Activated T-helper 2 cell treated with anti-CD3 and anti-CD28 coated beads, Interferon-gamma antibody, Interleukin-2, Interleukin-4, amounts not matched to agents 10 μg/mL and 5 μg/mL and 100 μg/mL, durations not matched to agents 14 hours and 24 hours and 36 hours (primary cell): ENCODE measurements at regions of chr9 and their contacts with region 1.

Region 1: GRCh38 chr9:72592502-72593403 is 71.3 kb downstream of the TMC1 start:
- DNase-seq: no peak
- H3K4me3 Mint-ChIP-seq: no peak overlapping the region
- H3K27ac Mint-ChIP-seq: no peak overlapping the region
- H3K4me1 Mint-ChIP-seq: peaks cover 50% of the 10 kb centered on the region
- H3K27me3 Mint-ChIP-seq: peaks cover 8% of the 10 kb centered on the region

Region 2: DNA sequence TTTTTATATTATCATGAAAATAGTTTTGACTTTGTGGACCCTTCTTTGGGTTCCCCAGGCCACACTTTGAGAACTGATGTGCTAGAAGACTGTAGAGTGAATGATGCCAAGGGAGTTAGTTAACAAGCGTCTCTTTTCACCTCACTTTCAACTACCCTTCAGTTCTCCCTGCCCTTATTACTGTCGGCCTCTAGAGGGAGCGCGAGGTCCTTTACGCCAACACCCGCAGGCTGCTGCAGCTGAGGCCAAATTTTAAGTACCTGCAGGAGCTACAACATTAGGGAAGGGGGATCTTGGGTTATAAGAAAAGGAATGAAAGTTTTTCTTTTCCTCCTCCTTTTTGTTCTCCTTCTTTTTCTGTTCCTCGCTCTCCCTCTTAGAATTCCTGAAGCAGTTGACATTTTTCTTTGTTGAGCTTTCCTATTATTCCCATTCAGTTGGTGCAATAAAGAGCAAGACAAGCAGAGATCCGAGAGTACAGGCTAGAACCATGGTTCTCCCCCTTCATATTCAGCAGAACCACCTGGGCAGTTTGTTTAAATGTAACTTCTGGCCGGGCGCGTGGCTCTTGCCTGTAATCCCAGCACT is 311.7 kb before region 1 on chr9:
- intact Hi-C with region 1: loop called (anchors 1 kb)
- DNase-seq: peak; percentile 46
- H3K4me3 Mint-ChIP-seq: no peak overlapping the region
- H3K27ac Mint-ChIP-seq: no peak overlapping the region
- H3K4me1 Mint-ChIP-seq: no peaks in the 10 kb centered on the region
- H3K27me3 Mint-ChIP-seq: no peaks in the 10 kb centered on the region

Region 3: DNA sequence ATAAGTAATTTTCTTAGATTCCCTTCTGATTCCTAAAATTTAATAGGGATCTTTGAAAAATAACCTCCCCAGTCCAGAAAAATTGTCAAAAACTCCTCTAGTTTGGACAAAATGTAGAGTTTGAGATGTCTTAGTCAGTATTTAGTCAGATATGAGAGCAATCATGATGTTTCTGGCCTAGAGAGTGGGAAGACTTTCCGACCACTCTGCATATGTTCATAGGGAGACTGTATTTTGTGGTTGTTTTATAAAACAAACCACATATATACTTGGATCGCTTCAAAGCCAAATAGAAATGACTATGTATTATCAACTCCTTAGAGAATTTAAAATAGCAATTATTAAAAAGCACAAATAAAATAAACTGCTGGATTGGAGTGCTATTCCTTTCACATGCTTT is 243.5 kb before region 1 on chr9:
- intact Hi-C with region 1: loop called (anchors 5 kb)
- DNase-seq: no peak
- H3K4me3 Mint-ChIP-seq: no peak overlapping the region
- H3K27ac Mint-ChIP-seq: no peak overlapping the region
- H3K4me1 Mint-ChIP-seq: peaks cover 18% of the 10 kb centered on the region
- H3K27me3 Mint-ChIP-seq: peaks cover 4% of the 10 kb centered on the region

Region 4: GRCh38 chr9:72526901-72527800 is 65.6 kb before region 1 on chr9:
- intact Hi-C with region 1: loop called (anchors 1 kb)
- DNase-seq: peak; percentile 61
- H3K4me3 Mint-ChIP-seq: peak overlapping the region; percentile 72
- H3K27ac Mint-ChIP-seq: peak overlapping the region; percentile 94
- H3K4me1 Mint-ChIP-seq: peaks cover 43% of the 10 kb centered on the region
- H3K27me3 Mint-ChIP-seq: no peaks in the 10 kb centered on the region

Region 5: DNA sequence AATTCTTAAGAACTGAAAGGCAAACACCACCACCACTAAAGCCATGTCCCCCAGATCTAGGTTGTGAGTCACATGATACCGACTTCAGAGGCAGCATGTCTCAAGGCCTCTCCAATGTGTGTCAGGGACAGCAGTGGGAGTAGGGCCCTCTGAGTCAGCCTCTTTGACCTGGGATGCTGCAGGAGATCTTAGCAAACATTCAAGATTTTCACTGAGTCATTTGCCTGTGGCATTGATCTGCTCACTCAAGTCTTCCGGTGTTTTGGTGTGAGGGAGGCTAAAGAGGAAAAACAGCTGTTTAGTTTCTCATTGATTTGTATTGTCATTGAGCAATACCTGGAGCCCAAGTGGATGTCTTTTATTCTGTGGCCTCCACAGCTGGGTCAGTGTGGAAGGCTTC is 35.2 kb before region 1 on chr9:
- intact Hi-C with region 1: loop called (anchors 5 kb)
- DNase-seq: peak; percentile 9
- H3K4me3 Mint-ChIP-seq: no peak overlapping the region
- H3K27ac Mint-ChIP-seq: peak overlapping the region; percentile 69
- H3K4me1 Mint-ChIP-seq: peaks cover 17% of the 10 kb centered on the region
- H3K27me3 Mint-ChIP-seq: peaks cover 3% of the 10 kb centered on the region